ENCODE measurements at regions of chr10 and their contacts with region 1.

Region 1: DNA sequence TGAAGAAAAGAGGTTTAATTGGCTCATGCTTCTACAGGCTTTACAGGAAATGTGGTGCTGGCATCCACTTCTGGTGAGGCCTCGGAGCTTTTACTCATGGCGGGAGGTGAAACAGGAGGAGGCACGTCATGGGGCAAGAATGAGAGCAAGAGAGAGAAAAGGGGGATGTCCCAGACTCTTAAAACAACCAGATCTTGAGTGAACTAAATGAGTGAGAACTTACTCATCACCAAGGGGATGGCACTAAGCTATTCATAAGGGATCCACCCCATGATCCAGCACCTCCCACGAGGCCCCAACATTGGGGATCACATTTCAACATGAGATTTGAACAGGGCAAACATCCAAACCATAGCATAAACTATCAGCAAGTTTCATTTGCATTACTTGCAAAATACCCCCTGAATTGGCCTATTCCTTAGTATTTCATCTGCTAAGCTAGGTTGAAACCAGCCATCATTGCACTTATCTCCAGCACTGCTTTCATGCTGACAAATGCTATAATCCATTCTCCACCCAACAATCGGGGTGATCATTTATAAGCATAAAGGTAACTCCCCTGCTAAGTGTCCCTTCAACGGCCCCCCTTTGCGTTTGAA is 179.0 kb downstream of the NOC3L start:
- DNase-seq: peak; percentile 71
- H3K4me3 ChIP-seq: no peak overlapping the region
- H3K27me3 ChIP-seq: no peaks in the 10 kb centered on the region
- CTCF ChIP-seq: no peak

Region 2: DNA sequence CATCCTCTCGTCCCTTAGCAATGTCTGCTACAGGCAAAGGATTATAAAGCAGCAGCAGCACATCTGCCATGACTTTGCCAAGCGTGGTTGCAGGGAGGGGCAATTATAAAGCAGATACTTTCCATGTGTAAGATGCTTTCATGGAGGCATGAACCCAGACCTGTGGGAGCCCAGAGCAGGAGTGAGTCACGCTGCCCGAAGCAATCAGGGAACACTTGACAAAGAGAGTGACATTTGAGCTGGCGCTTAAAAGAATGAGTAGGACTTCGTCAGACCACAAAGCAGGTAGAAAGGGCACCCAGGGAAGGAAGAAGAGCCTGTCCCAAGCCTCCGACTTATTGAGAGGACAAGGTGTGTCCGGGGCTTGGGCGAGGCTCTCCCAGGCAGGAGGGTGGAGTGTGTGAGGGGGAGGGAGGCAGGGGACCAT is 848.9 kb before region 1 on chr10:
- CTCF ChIA-PET with region 1: no interaction called
- POLR2A ChIA-PET with region 1: no interaction called
- DNase-seq: peak; percentile 73
- H3K4me3 ChIP-seq: no peak overlapping the region
- H3K27me3 ChIP-seq: no peaks in the 10 kb centered on the region
- CTCF ChIP-seq: no peak

Region 3: GRCh38 chr10:94123258-94123995 is 60.3 kb before region 1 on chr10:
- CTCF ChIA-PET with region 1: no interaction called
- POLR2A ChIA-PET with region 1: no interaction called
- DNase-seq: peak; percentile 70
- H3K4me3 ChIP-seq: no peak overlapping the region
- H3K27me3 ChIP-seq: no peaks in the 10 kb centered on the region
- CTCF ChIP-seq: no peak

Region 4: DNA sequence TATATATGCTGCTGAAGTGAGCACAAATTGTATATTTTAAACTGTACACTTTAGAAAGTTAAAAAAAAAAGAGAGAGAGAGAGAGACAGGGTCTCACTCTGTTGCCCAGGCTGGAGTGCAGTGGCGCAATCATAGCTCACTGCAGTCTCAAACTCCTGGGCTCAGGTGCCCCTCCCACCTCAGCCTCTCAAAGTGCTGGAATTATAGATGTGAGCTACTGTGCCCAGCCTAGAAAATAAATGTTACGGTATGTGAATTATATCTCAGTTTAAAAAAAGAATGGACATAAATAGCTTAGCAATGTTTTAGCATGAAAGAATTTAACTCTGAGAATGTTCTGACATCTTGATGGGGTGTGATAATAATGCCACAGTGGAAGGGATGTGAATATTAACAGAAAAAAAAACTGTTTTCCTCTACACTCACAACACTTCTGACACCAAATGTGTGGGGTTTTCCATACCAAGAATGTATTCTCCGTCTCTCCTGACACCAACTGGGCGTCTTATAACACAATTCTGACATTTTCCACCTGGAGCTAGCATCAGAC is 28.0 kb before region 1 on chr10:
- CTCF ChIA-PET with region 1: no interaction called
- POLR2A ChIA-PET with region 1: no interaction called
- DNase-seq: no peak
- H3K4me3 ChIP-seq: no peak overlapping the region
- H3K27me3 ChIP-seq: no peaks in the 10 kb centered on the region
- CTCF ChIP-seq: no peak

Region 5: DNA sequence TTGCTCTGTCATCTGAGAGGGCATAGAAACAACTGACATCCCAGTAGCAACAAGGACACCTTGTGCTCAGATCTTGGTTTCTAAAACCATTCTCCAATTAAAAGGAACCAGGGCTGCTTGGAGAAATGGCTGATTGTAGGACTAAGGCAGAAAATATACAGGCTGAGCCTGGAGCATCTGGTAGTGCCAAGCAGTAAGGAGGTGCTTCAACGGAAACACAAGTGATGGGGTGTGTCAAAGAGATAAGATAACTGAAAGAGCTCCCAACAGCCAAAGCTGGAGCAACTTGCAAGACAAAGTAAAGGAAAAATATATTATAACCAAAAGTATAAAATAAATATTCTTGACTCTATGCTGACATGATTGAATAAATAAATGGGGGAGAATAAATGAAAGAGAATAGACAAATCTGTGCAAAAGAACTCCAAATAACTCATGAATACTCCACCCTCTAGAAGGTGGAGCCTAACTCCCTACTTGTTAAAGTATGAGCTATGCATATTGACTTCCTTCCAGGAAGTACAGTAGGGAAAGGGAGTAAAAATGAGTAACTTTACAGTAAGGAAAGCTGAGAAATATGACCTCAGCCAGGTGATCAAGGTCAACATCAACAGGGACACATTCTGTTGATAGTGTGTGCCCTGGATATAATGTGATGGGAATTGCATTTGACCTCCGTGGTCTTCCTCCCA is 16.5 kb after region 1 on chr10:
- CTCF ChIA-PET with region 1: interaction called, 4 read pairs
- POLR2A ChIA-PET with region 1: interaction called, 12 read pairs
- DNase-seq: no peak
- H3K4me3 ChIP-seq: no peak overlapping the region
- H3K27me3 ChIP-seq: no peaks in the 10 kb centered on the region
- CTCF ChIP-seq: no peak

Region 6: DNA sequence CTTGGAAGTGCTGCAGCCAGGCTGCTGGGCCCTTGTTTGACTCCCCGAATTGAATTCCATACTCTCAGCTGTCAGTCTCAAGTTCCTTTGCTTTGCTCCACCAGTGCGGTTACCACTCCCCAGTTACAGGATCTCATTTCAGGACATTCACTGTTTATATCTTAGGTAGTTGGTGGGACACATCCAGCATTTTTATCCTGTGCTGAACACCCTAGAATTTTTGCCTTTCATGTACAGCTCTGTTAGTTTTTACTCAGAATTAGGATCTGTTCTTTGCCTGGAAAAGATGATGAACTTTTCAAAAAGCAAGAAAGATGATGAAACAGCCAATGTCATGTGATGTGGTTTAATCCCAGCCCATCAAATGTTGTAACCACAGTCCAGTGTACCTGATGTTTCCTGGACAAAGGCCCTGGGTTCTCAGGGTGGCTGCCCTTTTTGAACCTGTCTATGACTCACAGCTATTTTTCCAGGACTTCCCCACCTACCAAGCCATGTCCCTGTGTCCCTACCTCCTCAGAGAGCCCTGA is 29.3 kb after region 1 on chr10:
- CTCF ChIA-PET with region 1: no interaction called
- POLR2A ChIA-PET with region 1: no interaction called
- DNase-seq: no peak
- H3K4me3 ChIP-seq: no peak overlapping the region
- H3K27me3 ChIP-seq: peaks cover 1% of the 10 kb centered on the region
- CTCF ChIP-seq: no peak